Heart right ventricle (tissue), 16 donors: ENCODE measurements at regions of chr20 and their contacts with region 1.

Region 1: GRCh38 chr20:63475206-63475605 is 2.8 kb upstream of the KCNQ2 start:
- DNase-seq: no peak
- ATAC-seq: peak in 5 of 8 donors; percentile 36 to 64 (median 54)
- H3K4me3 ChIP-seq: no peak overlapping the region
- H3K27ac ChIP-seq: no peak overlapping the region
- H3K4me1 ChIP-seq: peaks cover 0 to 13% (median 9%) of the 10 kb centered on the region in 9 donors
- H3K27me3 ChIP-seq: peaks cover 27 to 94% (median 90%) of the 10 kb centered on the region in 7 donors
- CTCF ChIP-seq: no peak

Region 2: DNA sequence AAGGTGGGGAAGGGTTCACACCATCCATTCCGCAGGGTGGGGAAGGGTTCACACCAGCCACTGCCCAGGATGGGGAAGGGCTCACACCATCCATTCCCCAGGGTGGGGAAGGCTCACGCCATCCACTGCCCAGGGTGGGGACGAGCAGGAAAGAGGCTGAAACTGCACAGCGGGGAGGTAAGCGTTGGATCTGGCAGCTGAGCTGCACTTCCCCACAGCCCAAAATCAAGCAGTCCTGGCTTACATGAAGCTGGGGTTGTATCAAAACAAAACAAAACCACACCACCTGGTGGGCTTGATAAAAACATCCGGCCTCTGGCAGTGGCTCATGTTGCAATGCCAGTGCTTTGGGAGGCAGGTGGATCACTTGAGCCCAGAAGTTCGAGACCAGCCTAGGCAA is 1678.0 kb before region 1 on chr20:
- intact Hi-C with region 1: loop called in 1 of 10 experiments (anchors 10 kb)
- DNase-seq: no peak
- ATAC-seq: no peak
- H3K4me3 ChIP-seq: no peak overlapping the region
- H3K27ac ChIP-seq: no peak overlapping the region
- H3K4me1 ChIP-seq: no peaks in the 10 kb centered on the region
- H3K27me3 ChIP-seq: peaks cover 0 to 59% (median 46%) of the 10 kb centered on the region in 7 donors
- CTCF ChIP-seq: no peak

Region 3: DNA sequence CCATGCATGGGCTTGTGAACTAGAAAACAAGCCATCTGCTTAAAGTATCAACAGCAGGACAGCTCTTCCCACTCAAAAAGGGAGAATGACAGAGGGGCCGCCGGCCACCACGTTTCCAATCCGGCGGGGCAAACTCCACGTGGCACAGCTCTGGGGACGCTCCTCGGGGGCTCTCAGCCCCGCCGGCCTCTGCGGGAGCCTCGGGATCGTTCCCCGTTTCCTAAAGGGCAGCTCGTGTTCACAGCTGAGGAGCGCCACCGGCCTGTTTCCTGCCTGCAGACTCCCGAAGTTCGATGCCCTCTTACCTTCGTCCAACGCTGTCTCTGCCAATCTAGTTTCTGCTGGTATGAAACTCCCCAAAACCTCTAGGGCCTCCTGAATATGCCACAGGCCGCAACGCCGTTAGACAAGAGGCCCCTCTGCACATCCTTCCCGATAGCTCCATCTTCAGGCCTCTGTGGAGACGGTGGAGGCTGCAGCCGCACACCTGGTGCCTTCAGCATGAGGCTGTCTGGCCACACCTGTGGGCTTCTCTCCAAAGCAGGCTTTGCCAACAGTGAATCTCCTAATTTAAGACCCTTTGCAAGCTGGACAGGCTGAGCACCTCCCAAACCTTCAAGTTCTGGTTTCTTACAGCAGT is 49.2 kb before region 1 on chr20:
- intact Hi-C with region 1: no loop called
- DNase-seq: no peak
- ATAC-seq: no peak
- H3K4me3 ChIP-seq: no peak overlapping the region
- H3K27ac ChIP-seq: no peak overlapping the region
- H3K4me1 ChIP-seq: no peaks in the 10 kb centered on the region
- H3K27me3 ChIP-seq: peaks cover 0 to 25% (median 15%) of the 10 kb centered on the region in 7 donors
- CTCF ChIP-seq: no peak